Activated T-helper 1 cell treated with anti-CD3 and anti-CD28 coated beads, Interleukin-12 subunit alpha, Interleukin-12 subunit beta, Interleukin-2, Interleukin-4 antibody, amounts not matched to agents 30 ng/mL and 10 ng/mL and 1 ng/mL, durations not matched to agents 14 hours and 24 hours and 36 hours (primary cell): ENCODE measurements at regions of chr5 and their contacts with region 1.

Region 1: GRCh38 chr5:32709781-32710549 is 1.2 kb upstream of the NPR3 start:
- DNase-seq: peak; percentile 41
- H3K4me3 Mint-ChIP-seq: peak overlapping the region; percentile 79
- H3K27ac Mint-ChIP-seq: peak overlapping the region; percentile 80
- H3K4me1 Mint-ChIP-seq: peaks cover 30% of the 10 kb centered on the region
- H3K27me3 Mint-ChIP-seq: peaks cover 61% of the 10 kb centered on the region

Region 2: DNA sequence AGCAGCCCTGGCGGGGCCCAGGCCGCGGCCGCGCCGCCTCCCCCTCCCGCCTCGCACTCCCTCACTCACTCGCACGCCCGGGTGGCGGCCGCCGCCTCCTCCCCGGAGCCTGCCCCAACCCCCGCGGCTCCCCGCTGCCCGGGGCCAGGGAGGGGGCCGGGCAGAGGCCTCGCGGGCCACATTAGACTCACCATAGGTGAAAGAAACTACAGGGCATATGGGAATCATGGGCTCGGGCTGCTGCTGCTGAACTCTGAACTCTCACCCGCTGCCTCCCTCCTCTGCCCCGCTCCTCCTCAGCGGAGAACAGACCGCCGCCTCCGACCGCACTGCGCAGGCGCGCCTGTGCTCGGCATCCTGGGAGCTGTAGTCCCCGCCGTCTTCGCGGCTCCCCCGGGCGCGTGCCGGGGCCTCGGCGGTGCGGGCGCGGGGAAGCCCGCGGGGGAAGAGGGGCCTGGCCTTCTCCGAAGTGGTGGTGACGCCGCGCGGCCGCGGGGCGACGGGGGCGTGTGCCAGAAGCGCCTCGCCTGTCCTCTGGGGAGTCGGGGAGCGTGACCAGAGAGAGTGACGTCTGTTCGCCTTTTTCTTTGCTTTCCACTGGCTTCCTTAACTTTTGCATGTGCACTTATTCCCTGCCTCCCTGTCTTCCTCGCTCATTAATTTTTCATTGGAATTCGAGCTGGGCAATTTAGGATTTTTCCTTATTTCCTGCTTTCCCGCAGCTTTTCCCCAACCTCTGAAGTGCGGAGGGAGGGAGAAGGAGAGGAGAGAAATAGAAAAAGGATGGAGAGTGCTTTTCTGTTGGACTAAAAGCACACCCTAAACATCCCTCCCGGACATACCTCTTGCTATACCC is 265.3 kb before region 1 on chr5 and contains the start of gene ZFR:
- intact Hi-C with region 1: no loop called
- DNase-seq: peak; percentile 94
- H3K4me3 Mint-ChIP-seq: peak within 1 kb of the TSS; percentile 97
- H3K27ac Mint-ChIP-seq: peak within 1 kb of the TSS; percentile 98
- H3K4me1 Mint-ChIP-seq: peaks cover 29% of the 10 kb centered on the region
- H3K27me3 Mint-ChIP-seq: peaks cover 12% of the 10 kb centered on the region
- total RNA-seq, gene ZFR: 67.7 and 70.8 TPM in 2 replicates

Region 3: GRCh38 chr5:32651638-32652037 is 58.3 kb before region 1 on chr5:
- intact Hi-C with region 1: no loop called
- DNase-seq: no peak
- H3K4me3 Mint-ChIP-seq: no peak overlapping the region
- H3K27ac Mint-ChIP-seq: no peak overlapping the region
- H3K4me1 Mint-ChIP-seq: no peaks in the 10 kb centered on the region
- H3K27me3 Mint-ChIP-seq: no peaks in the 10 kb centered on the region

Region 4: DNA sequence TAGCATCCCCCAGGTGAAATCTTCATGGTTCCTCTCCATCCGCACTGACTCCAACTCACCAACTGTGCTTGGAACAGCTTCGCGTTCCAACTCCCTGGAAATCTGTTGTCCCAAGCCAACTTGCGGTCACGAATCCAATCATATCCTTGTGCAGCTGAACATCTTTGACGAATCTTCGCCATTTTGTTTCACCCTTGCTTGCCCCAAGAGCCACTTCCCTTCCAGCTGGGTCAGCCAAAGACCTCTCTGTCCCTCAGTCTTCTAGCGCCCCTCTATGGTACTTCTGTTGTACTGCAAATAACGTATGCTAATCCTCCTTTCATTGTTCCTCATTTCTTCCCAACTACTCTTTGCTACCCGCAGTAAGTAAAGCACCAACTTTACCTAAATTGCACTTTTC is 669.8 kb after region 1 on chr5:
- intact Hi-C with region 1: loop called (anchors 5 kb)
- DNase-seq: no peak
- H3K4me3 Mint-ChIP-seq: no peak overlapping the region
- H3K27ac Mint-ChIP-seq: no peak overlapping the region
- H3K4me1 Mint-ChIP-seq: no peaks in the 10 kb centered on the region
- H3K27me3 Mint-ChIP-seq: peaks cover 1% of the 10 kb centered on the region

Region 5: GRCh38 chr5:33423018-33423630 is 713.2 kb after region 1 on chr5:
- intact Hi-C with region 1: loop called (anchors 2 kb)
- DNase-seq: no peak
- H3K4me3 Mint-ChIP-seq: no peak overlapping the region
- H3K27ac Mint-ChIP-seq: no peak overlapping the region
- H3K4me1 Mint-ChIP-seq: no peaks in the 10 kb centered on the region
- H3K27me3 Mint-ChIP-seq: peaks cover 1% of the 10 kb centered on the region